ENCODE measurements at regions of chrX and their contacts with region 1.

Region 1: DNA sequence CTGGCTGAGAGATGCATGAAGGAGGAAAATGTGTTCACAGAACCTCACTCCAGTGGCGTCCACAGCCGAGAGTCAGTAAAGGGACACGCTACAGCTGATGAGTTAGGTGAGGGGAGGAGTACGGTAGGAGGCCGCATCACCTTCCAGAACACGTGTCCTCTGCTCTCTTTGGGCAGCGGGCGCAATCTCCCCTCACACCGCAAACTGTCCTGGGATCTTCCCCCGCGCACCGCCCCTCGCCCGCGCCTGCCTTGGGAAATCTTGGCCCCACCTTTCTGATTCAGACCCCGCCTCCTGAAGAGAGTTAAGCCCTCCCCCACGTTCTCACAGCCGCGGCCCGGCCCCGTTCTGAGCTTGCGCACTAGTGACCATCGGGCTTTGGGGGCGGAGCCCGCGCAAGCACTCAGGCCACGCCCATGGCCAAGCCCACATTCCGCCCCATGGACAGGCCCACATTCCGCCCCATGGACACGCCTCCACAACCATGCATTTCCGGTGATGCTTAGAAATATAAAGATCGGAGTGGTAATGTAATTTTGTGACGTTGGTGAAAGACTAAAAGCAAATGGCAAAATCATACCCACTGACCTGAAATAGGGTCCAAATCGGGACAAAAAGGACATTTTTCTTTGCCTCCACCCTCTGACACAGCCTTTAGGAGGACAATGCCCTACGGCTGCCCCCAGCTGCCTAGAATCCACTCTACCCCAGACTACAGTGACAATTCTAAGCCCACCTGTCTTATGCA is 13.3 kb downstream of the SMIM10 start:
- DNase-seq: peak; percentile 90
- H3K4me3 ChIP-seq: peak overlapping the region in 2 of 3 experiments; percentile 33 to 60
- H3K27ac ChIP-seq: no peak overlapping the region
- H3K4me1 ChIP-seq: peaks cover 4% of the 10 kb centered on the region
- H3K27me3 ChIP-seq: peaks cover 1 to 4% of the 10 kb centered on the region in 2 experiments
- CTCF ChIP-seq: no peak
- POLR2A ChIP-seq: no peak

Region 2: DNA sequence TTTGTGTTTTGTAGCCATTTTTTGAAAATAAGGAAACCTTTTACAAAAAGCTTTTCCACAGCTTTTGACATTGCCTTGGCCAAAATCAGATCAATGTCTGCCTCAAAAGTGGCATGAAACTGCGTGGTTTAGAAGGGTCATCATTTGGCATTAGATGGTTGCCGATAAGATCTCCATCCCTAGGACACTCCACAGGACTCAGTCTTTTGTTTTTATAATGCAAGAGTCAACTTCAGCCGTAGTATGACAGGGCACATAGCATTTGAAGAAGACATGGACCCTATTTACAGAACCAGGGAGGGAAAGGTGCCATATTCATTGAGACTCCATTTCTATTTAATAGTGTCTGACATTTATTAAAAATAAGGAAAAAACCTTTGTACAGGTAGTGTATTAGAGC is 46.6 kb after region 1 on chrX:
- CTCF ChIA-PET with region 1: interaction called, 3 read pairs
- POLR2A ChIA-PET with region 1: no interaction called
- dilution Hi-C with region 1: no loop called
- intact Hi-C with region 1: loop called (anchors 1 kb)
- DNase-seq: no peak
- H3K4me3 ChIP-seq: peak overlapping the region in 1 of 3 experiments; percentile 59
- H3K27ac ChIP-seq: peak overlapping the region; percentile 17
- H3K4me1 ChIP-seq: peaks cover 6% of the 10 kb centered on the region
- H3K27me3 ChIP-seq: no peaks in the 10 kb centered on the region
- CTCF ChIP-seq: no peak
- POLR2A ChIP-seq: no peak

Measured in endothelial cell of umbilical vein (primary cell).